ENCODE measurements at regions of chr1 and their contacts with region 1.

Region 1: GRCh38 chr1:154878371-154879022 is 8.4 kb upstream of the KCNN3 start:
- DNase-seq: peak; percentile 72
- H3K4me3 ChIP-seq: no peak overlapping the region
- H3K27ac ChIP-seq: no peak overlapping the region
- H3K4me1 ChIP-seq: peaks cover 9% of the 10 kb centered on the region
- H3K27me3 ChIP-seq: no peaks in the 10 kb centered on the region
- CTCF ChIP-seq: peak; percentile 86 to 94
- POLR2A ChIP-seq: no peak

Region 2: GRCh38 chr1:154663471-154664060 is 214.9 kb before region 1 on chr1:
- CTCF ChIA-PET with region 1: interaction called, 113 read pairs
- POLR2A ChIA-PET with region 1: no interaction called
- dilution Hi-C with region 1: no loop called
- intact Hi-C with region 1: no loop called
- DNase-seq: no peak
- H3K4me3 ChIP-seq: no peak overlapping the region
- H3K27ac ChIP-seq: no peak overlapping the region
- H3K4me1 ChIP-seq: no peaks in the 10 kb centered on the region
- H3K27me3 ChIP-seq: peaks cover 7 to 30% of the 10 kb centered on the region in 2 experiments
- CTCF ChIP-seq: no peak
- POLR2A ChIP-seq: no peak

Region 3: GRCh38 chr1:154760469-154760933 is 118.0 kb before region 1 on chr1:
- CTCF ChIA-PET with region 1: interaction called, 50 read pairs
- POLR2A ChIA-PET with region 1: no interaction called
- dilution Hi-C with region 1: no loop called
- intact Hi-C with region 1: loop called (anchors 2 kb)
- DNase-seq: peak; percentile 19
- H3K4me3 ChIP-seq: peak overlapping the region in 1 of 3 experiments; percentile 29
- H3K27ac ChIP-seq: no peak overlapping the region
- H3K4me1 ChIP-seq: peaks cover 3% of the 10 kb centered on the region
- H3K27me3 ChIP-seq: peaks cover 8 to 34% of the 10 kb centered on the region in 2 experiments
- CTCF ChIP-seq: peak; percentile 76 to 86
- POLR2A ChIP-seq: no peak

Region 4: GRCh38 chr1:154773551-154773950 is 104.9 kb before region 1 on chr1:
- CTCF ChIA-PET with region 1: interaction called, 50 read pairs
- POLR2A ChIA-PET with region 1: no interaction called
- dilution Hi-C with region 1: no loop called
- intact Hi-C with region 1: no loop called
- DNase-seq: no peak
- H3K4me3 ChIP-seq: no peak overlapping the region
- H3K27ac ChIP-seq: no peak overlapping the region
- H3K4me1 ChIP-seq: no peaks in the 10 kb centered on the region
- H3K27me3 ChIP-seq: peaks cover 0 to 2% of the 10 kb centered on the region in 2 experiments
- CTCF ChIP-seq: no peak
- POLR2A ChIP-seq: no peak

Region 5: DNA sequence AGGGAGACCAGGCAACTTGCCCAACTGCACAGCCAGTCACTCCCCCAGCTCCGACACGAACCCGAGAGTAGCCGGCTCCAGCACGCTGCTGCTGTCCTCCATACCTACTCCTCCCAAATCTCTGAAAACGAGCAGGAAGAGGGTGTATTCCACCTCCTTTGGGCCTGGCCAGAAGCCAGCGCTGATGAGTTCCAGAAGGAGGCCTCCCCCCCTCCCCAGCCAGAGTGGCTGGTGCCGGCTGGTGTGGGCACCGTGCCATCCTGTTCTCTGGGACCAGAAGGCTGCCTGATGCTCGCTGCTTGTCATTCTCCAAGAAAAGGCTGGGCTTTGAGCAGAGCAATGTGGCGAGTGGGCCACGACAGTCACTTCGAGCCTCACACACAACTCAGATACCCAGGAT is 30.6 kb before region 1 on chr1:
- CTCF ChIA-PET with region 1: interaction called, 10 read pairs
- POLR2A ChIA-PET with region 1: no interaction called
- dilution Hi-C with region 1: no loop called
- intact Hi-C with region 1: no loop called
- DNase-seq: no peak
- H3K4me3 ChIP-seq: no peak overlapping the region
- H3K27ac ChIP-seq: no peak overlapping the region
- H3K4me1 ChIP-seq: no peaks in the 10 kb centered on the region
- H3K27me3 ChIP-seq: peaks cover 3 to 8% of the 10 kb centered on the region in 2 experiments
- CTCF ChIP-seq: no peak
- POLR2A ChIP-seq: no peak

Region 6: GRCh38 chr1:154896771-154897391 is 18.4 kb after region 1 on chr1:
- CTCF ChIA-PET with region 1: interaction called, 15 read pairs
- POLR2A ChIA-PET with region 1: no interaction called
- dilution Hi-C with region 1: no loop called
- intact Hi-C with region 1: no loop called
- DNase-seq: no peak
- H3K4me3 ChIP-seq: no peak overlapping the region
- H3K27ac ChIP-seq: no peak overlapping the region
- H3K4me1 ChIP-seq: no peaks in the 10 kb centered on the region
- H3K27me3 ChIP-seq: peaks cover 3 to 14% of the 10 kb centered on the region in 2 experiments
- CTCF ChIP-seq: no peak
- POLR2A ChIP-seq: no peak

Region 7: DNA sequence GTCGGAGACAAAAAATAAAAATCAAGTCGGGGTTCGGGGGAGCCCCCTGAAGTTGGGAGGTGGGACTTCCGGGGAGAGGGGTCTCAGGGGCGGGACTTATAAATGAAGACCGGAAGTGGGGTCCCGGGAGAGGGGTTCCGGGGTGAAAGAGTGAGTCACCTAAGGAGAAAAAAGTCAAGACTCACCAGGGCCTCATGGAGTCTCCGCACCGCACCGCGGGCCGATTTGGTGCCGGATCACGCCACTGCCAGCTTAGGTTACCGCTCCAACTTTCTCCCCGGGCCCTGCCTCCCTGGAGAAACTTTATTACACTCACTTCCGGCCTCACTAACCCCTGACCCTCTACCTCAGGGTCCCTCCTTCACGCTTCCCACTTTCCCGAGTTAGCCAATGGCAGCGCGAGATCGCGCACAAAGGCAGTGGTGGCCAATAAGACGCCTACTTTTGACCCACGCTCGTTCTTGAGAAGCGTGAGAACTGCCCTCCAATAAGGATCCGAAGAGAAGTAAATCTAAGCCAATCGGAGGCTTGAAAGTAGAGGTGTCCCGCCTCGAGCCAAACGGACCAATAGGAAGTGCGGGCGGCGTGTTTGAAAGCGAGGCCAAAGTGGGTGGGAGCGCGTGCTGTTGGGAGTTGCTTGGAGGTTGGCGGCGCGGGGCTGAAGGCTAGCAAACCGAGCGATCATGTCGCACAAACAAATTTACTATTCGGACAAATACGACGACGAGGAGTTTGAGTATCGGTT is 95.7 kb after region 1 on chr1 and contains the start of gene CKS1B:
- CTCF ChIA-PET with region 1: no interaction called
- POLR2A ChIA-PET with region 1: no interaction called
- dilution Hi-C with region 1: no loop called
- intact Hi-C with region 1: no loop called
- DNase-seq: peak; percentile 100
- H3K4me3 ChIP-seq: peak within 1 kb of the TSS; percentile 64 to 88 (median 87)
- H3K27ac ChIP-seq: peak within 1 kb of the TSS; percentile 99
- H3K4me1 ChIP-seq: peaks cover 36% of the 10 kb centered on the region
- H3K27me3 ChIP-seq: no peaks in the 10 kb centered on the region
- CTCF ChIP-seq: no peak
- POLR2A ChIP-seq: peak; percentile 60
- total RNA-seq, gene CKS1B: 126 and 128 TPM in 2 replicates